ENCODE measurements at regions of chr16 and their contacts with region 1.

Region 1: DNA sequence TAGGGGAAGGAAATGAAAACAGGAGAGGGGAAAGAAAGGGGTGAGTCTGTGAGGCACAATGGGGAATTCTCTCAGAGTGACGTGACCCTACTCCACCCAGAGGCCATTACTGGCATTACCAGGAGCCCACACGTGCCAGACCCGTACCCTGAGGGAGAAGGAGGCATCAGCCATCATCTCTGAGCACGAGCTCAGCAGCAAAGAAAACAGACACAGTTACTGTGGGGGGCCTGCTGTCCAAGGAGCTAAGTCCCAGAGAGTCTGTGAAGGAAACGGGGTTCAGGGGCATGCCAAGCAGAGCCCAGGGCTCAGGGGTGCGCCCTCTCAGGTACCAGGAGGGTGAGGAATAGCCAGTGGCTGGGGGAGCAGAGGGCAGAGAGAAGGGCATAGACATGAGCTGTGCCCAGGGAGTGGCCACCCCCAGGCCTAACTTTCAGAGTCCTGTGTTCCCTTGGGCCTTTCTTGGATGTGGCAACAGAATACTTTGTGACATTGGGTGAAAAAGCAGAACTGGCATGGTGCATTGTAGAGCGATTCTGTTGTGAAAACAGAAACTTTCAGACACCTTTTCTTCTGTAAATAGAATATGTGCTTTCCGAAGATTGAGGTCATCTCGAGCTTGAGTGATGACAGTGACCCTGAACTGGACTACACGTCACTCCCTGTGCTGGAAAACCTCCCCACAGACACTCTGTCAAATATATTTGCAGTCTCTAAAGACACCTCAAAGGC is 11.3 kb downstream of the TAF1C start:
- DNase-seq: peak; percentile 64
- ATAC-seq: peak; percentile 41

Region 2: GRCh38 chr16:83967806-83968305 is 207.7 kb before region 1 on chr16 and contains the start of gene NECAB2:
- intact Hi-C with region 1: loop called (anchors 5 kb)
- DNase-seq: peak; percentile 84
- ATAC-seq: peak; percentile 65
- total RNA-seq, gene NECAB2: 1.8 TPM

Region 3: DNA sequence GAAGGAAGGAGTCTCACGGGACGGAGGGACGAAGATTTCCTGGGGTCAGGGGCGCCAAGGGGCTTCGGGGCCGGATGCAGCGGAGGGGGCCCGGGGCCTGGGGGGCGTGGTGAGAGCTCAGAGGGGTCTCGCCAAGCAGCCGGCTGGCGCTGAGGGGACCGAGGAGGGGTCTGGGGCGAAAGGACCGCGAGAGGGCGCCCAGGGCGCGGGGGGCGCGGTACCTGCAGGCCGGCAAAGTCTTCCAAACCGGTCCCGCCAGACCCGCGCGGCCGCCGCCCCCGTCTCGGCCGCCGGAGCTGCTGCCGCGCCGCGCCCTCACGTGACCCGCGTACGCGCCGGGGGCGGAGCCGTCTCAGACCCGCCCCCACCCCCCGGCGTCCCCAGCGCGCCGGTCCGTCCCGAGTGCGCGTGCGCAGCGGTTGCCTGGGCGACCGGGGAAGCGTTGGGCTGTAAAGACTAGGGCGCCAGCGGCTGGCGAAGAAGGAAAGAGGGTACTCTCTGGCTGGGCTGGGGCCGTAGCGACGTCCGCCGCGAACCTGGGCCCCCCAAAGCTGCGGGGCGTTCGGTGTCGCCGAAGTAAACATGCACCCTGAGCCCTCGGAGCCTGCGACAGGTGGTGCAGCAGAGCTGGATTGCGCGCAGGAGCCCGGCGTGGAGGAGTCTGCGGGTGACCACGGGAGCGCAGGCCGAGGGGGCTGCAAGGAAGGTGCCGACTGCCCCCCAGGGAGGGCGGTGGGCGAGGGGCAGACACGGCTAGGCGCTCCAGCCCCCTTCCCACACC is 30.5 kb before region 1 on chr16 and contains the starts of genes DNAAF1 and HSDL1:
- intact Hi-C with region 1: loop called (anchors 2 kb)
- DNase-seq: peak; percentile 95
- ATAC-seq: peak; percentile 95
- total RNA-seq, gene DNAAF1: not detected
- total RNA-seq, gene HSDL1: 24.1 TPM